Heart right ventricle (tissue), 16 donors: ENCODE measurements at regions of chr10 and their contacts with region 1.

Region 1: DNA sequence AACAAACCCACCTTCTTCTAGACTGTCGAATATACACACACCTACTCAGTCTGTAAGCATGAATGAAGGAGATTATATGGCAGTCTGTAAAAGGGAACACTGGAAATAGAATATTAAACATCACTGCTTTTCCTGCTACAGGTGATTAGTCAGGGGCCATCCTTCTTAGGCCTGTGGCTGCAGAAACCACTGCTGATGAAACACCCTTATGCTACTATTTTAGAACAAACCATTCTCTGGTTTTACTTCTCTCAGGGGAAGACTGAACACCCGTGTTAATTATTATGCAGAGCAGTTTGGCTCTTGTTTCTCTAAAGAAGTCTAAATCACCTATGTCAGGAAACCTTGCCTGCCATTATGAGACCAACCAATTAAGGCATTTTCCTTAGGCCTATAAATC is 351.1 kb upstream of the KLF6 start:
- DNase-seq: no peak
- ATAC-seq: no peak
- H3K4me3 ChIP-seq: no peak overlapping the region
- H3K27ac ChIP-seq: no peak overlapping the region
- H3K4me1 ChIP-seq: peaks cover 0 to 19% (median 11%) of the 10 kb centered on the region in 9 donors
- H3K27me3 ChIP-seq: no peaks in the 10 kb centered on the region
- CTCF ChIP-seq: no peak

Region 2: DNA sequence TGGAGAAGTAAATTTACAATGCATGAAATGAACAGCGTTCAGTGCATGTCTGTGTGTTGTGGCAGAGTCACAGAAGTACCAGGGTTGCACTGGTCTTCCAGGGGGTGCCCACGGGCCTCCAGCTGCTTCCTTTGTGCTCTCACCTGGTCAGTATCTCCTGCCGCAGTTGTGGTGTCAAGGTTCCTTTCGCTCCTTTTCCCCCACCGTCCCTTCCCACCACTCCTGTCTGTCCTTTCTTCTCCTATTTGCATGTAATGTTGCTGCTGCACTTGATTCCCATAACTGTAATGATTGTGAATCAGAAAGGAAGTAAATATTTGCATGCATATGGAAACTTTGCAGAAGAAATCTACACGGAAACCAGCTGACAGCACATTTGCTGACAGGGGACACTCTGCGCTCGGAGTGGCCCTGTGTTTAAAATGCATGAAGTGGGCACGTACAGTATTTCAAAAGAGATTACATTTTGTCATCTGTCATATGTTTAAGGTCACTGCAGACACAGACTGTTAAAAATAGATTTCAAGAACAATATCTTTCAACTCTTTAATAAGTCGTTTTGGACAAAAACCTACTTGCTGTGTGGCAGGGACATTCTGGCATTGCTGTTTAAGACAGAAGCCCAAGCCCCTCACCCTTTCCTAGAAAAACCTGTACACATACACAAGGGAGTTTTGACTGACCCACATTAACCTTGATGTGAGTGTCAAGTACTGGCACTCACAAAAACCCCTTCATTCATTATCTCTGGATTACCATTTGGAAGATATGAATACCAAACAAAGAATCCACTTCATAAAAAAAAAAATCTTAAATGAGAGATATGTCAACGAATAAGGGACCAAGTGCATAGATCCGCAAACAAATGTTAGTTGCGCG is 14.4 kb before region 1 on chr10:
- intact Hi-C with region 1: no loop called
- DNase-seq: peak in 1 of 2 donors; percentile 15
- ATAC-seq: peak in 7 of 8 donors; percentile 38 to 87 (median 76)
- H3K4me3 ChIP-seq: peak overlapping the region in 6 of 10 donors; percentile 9 to 39 (median 19)
- H3K27ac ChIP-seq: peak overlapping the region in 4 of 10 donors; percentile 16 to 88 (median 32)
- H3K4me1 ChIP-seq: peaks cover 0 to 37% (median 16%) of the 10 kb centered on the region in 9 donors
- H3K27me3 ChIP-seq: no peaks in the 10 kb centered on the region
- CTCF ChIP-seq: no peak

Region 3: GRCh38 chr10:4885162-4885561 is 749.0 kb after region 1 on chr10:
- intact Hi-C with region 1: loop called in 1 of 10 experiments (anchors 5 kb)
- DNase-seq: no peak
- ATAC-seq: no peak
- H3K4me3 ChIP-seq: no peak overlapping the region
- H3K27ac ChIP-seq: no peak overlapping the region
- H3K4me1 ChIP-seq: no peaks in the 10 kb centered on the region
- H3K27me3 ChIP-seq: no peaks in the 10 kb centered on the region
- CTCF ChIP-seq: no peak